GM12878 (cell line): ENCODE measurements at regions of chr2 and their contacts with region 1.

Region 1: GRCh38 chr2:55050133-55050994 is at the start of gene RTN4:
- DNase-seq: peak; percentile 98
- ATAC-seq: peak; percentile 85
- H3K4me3 ChIP-seq: peak within 1 kb of the TSS; percentile 89
- H3K27ac ChIP-seq: peak within 1 kb of the TSS; percentile 86
- H3K4me1 ChIP-seq: peaks cover 10% of the 10 kb centered on the region; the same call in 1 of the 2 replicates
- H3K27me3 ChIP-seq: no peaks in the 10 kb centered on the region
- CTCF ChIP-seq: peak in 1 of 3 experiments; percentile 18; a peak in 1 of 6 replicates
- EP300 ChIP-seq: 0 out of 4 replicates have a peak, but pooled peaks of 1 of the 2 experiments have one; percentile 27
- POLR2A ChIP-seq: peak; percentile 100
- RAD21 ChIP-seq: no peak
- polyA plus RNA-seq, gene RTN4: 68.0 to 112 TPM

Region 2: GRCh38 chr2:54899576-54900200 is 150.7 kb before region 1 on chr2:
- CTCF ChIA-PET with region 1: interaction called, 9 read pairs
- POLR2A ChIA-PET with region 1: no interaction called
- RAD21 ChIA-PET with region 1: interaction called, 14 read pairs
- SMC1A ChIA-PET with region 1: interaction called, 7 read pairs
- in situ Hi-C with region 1: no loop called
- intact Hi-C with region 1: no loop called
- DNase-seq: peak; percentile 4
- ATAC-seq: peak; percentile 68
- H3K4me3 ChIP-seq: no peak overlapping the region
- H3K27ac ChIP-seq: no peak overlapping the region
- H3K4me1 ChIP-seq: no peaks in the 10 kb centered on the region
- H3K27me3 ChIP-seq: no peaks in the 10 kb centered on the region
- CTCF ChIP-seq: peak; percentile 39 to 64 (median 55); a peak in 5 of 6 replicates
- EP300 ChIP-seq: no peak
- POLR2A ChIP-seq: no peak
- RAD21 ChIP-seq: peak; percentile 92

Region 3: GRCh38 chr2:55014962-55015939 is 35.1 kb before region 1 on chr2:
- CTCF ChIA-PET with region 1: interaction called, 14 read pairs
- POLR2A ChIA-PET with region 1: interaction called, 9 read pairs
- RAD21 ChIA-PET with region 1: interaction called, 27 read pairs
- SMC1A ChIA-PET with region 1: interaction called, 98 read pairs
- in situ Hi-C with region 1: no loop called
- intact Hi-C with region 1: loop called (anchors 2 kb)
- DNase-seq: no peak
- ATAC-seq: peak; percentile 49
- H3K4me3 ChIP-seq: no peak overlapping the region
- H3K27ac ChIP-seq: no peak overlapping the region
- H3K4me1 ChIP-seq: peaks cover 15% of the 10 kb centered on the region; the same call in 1 of the 2 replicates
- H3K27me3 ChIP-seq: no peaks in the 10 kb centered on the region
- CTCF ChIP-seq: peak; percentile 51 to 64 (median 55); a peak in 5 of 6 replicates
- EP300 ChIP-seq: no peak
- POLR2A ChIP-seq: no peak
- RAD21 ChIP-seq: peak; percentile 93

Region 4: DNA sequence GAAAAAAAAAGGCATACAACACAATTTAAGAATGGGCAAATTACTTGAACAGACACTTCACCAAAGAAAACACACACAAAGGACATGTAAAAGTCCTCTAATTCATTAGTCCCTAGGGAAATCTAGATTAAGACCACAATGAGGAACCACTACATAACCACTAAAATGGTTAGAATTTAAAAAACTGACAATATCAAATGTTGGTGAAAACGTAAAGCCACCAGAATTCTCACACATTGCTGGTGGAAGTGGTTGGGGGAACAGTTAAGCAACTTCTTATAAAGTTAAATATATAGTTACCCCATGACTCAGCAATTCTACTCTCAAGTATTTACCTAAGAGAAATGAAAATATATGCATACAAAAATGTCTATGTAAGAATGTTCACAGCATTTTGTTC is 11.9 kb before region 1 on chr2:
- CTCF ChIA-PET with region 1: interaction called, 22 read pairs
- POLR2A ChIA-PET with region 1: interaction called, 37 read pairs
- RAD21 ChIA-PET with region 1: interaction called, 16 read pairs
- SMC1A ChIA-PET with region 1: interaction called, 18 read pairs
- in situ Hi-C with region 1: no loop called
- intact Hi-C with region 1: loop called (anchors 1 kb)
- DNase-seq: no peak
- ATAC-seq: no peak
- H3K4me3 ChIP-seq: no peak overlapping the region
- H3K27ac ChIP-seq: no peak overlapping the region
- H3K4me1 ChIP-seq: peaks cover 10% of the 10 kb centered on the region
- H3K27me3 ChIP-seq: no peaks in the 10 kb centered on the region
- CTCF ChIP-seq: no peak
- EP300 ChIP-seq: no peak
- POLR2A ChIP-seq: no peak
- RAD21 ChIP-seq: no peak

Region 5: GRCh38 chr2:55168221-55169154 is 118.1 kb after region 1 on chr2:
- CTCF ChIA-PET with region 1: interaction called, 146 read pairs
- POLR2A ChIA-PET with region 1: interaction called, 5 read pairs
- RAD21 ChIA-PET with region 1: interaction called, 107 read pairs
- SMC1A ChIA-PET with region 1: interaction called, 47 read pairs
- in situ Hi-C with region 1: no loop called
- intact Hi-C with region 1: loop called (anchors 5 kb)
- DNase-seq: no peak
- ATAC-seq: peak; percentile 83
- H3K4me3 ChIP-seq: no peak overlapping the region
- H3K27ac ChIP-seq: no peak overlapping the region
- H3K4me1 ChIP-seq: no peaks in the 10 kb centered on the region
- H3K27me3 ChIP-seq: no peaks in the 10 kb centered on the region
- CTCF ChIP-seq: peak; percentile 73 to 74 (median 73)
- EP300 ChIP-seq: no peak
- POLR2A ChIP-seq: no peak
- RAD21 ChIP-seq: peak; percentile 89

Region 6: GRCh38 chr2:55419679-55420438 is 369.5 kb after region 1 on chr2 and contains the start of gene CCDC88A:
- CTCF ChIA-PET with region 1: no interaction called
- POLR2A ChIA-PET with region 1: no interaction called
- RAD21 ChIA-PET with region 1: no interaction called
- SMC1A ChIA-PET with region 1: no interaction called
- in situ Hi-C with region 1: no loop called
- intact Hi-C with region 1: loop called (anchors 10 kb)
- DNase-seq: peak; percentile 59
- ATAC-seq: peak; percentile 83
- H3K4me3 ChIP-seq: peak within 1 kb of the TSS; percentile 94
- H3K27ac ChIP-seq: peak within 1 kb of the TSS; percentile 75
- H3K4me1 ChIP-seq: peaks cover 3% of the 10 kb centered on the region; the same call in 1 of the 2 replicates
- H3K27me3 ChIP-seq: no peaks in the 10 kb centered on the region
- CTCF ChIP-seq: peak in 1 of 3 experiments; percentile 15; a peak in 1 of 6 replicates
- EP300 ChIP-seq: no peak
- POLR2A ChIP-seq: peak; percentile 89
- RAD21 ChIP-seq: no peak
- polyA plus RNA-seq, gene CCDC88A: 27.7 to 30.2 TPM